ENCODE measurements at regions of chr19 and their contacts with region 1.

Region 1: GRCh38 chr19:6862673-6863078 is 24.7 kb upstream of the ADGRE1 start:
- DNase-seq: peak; percentile 78
- H3K4me3 ChIP-seq: no peak overlapping the region
- H3K27ac ChIP-seq: no peak overlapping the region
- H3K4me1 ChIP-seq: peaks cover 3% of the 10 kb centered on the region
- H3K27me3 ChIP-seq: no peaks in the 10 kb centered on the region
- CTCF ChIP-seq: peak; percentile 87 to 88

Region 2: DNA sequence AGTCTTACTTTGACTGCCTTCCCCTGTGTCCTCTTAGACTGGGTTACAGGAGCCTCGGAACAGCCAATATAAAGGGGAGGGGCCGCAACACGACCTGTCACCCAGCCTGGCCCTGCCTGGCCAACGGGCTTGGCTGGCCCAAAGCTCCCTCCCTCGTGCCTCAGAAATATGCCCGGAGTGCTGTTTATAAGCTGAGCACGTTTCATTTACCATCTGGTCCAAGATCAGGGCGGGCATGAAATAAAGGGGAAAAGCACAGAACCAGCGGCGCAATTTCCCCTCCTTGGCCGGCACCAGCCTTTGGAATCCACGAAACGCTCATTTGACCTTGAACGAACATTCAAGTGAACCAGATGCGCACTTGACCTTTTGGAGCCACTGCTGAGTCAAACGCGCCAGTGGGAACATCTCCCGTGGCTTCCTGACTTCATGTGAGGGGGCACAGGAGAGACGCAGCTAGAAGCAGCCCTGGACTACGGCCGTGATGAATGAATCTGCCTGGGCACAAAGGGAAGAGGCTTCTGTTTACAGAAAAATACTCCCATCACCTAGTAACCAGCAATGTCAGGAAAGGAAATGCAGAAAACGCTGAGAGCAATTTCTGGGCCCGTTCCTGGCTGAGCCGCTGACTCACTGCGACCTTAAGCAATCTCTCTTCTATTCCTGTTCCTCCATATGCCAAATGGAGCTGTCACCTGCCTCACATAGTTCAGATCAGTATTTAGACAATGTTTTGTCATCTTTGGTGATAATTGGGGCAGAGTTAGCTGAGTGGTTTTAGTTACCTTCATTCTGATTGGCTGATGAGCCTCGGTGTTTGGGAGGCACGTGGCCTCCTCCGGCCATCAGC is 805.6 kb before region 1 on chr19:
- CTCF ChIA-PET with region 1: no interaction called
- dilution Hi-C with region 1: no loop called
- in situ Hi-C with region 1: no loop called
- intact Hi-C with region 1: loop called (anchors 10 kb)
- DNase-seq: peak; percentile 98
- H3K4me3 ChIP-seq: peak overlapping the region; percentile 6 to 36 (median 23)
- H3K27ac ChIP-seq: peak overlapping the region; percentile 99
- H3K4me1 ChIP-seq: peaks cover 57% of the 10 kb centered on the region
- H3K27me3 ChIP-seq: no peaks in the 10 kb centered on the region
- CTCF ChIP-seq: peak in 1 of 2 donors; percentile 1

Region 3: GRCh38 chr19:6297202-6297601 is 565.5 kb before region 1 on chr19:
- CTCF ChIA-PET with region 1: no interaction called
- dilution Hi-C with region 1: no loop called
- in situ Hi-C with region 1: no loop called
- intact Hi-C with region 1: loop called (anchors 5 kb)
- DNase-seq: no peak
- H3K4me3 ChIP-seq: no peak overlapping the region
- H3K27ac ChIP-seq: no peak overlapping the region
- H3K4me1 ChIP-seq: no peaks in the 10 kb centered on the region
- H3K27me3 ChIP-seq: peaks cover 2% of the 10 kb centered on the region
- CTCF ChIP-seq: no peak

Region 4: DNA sequence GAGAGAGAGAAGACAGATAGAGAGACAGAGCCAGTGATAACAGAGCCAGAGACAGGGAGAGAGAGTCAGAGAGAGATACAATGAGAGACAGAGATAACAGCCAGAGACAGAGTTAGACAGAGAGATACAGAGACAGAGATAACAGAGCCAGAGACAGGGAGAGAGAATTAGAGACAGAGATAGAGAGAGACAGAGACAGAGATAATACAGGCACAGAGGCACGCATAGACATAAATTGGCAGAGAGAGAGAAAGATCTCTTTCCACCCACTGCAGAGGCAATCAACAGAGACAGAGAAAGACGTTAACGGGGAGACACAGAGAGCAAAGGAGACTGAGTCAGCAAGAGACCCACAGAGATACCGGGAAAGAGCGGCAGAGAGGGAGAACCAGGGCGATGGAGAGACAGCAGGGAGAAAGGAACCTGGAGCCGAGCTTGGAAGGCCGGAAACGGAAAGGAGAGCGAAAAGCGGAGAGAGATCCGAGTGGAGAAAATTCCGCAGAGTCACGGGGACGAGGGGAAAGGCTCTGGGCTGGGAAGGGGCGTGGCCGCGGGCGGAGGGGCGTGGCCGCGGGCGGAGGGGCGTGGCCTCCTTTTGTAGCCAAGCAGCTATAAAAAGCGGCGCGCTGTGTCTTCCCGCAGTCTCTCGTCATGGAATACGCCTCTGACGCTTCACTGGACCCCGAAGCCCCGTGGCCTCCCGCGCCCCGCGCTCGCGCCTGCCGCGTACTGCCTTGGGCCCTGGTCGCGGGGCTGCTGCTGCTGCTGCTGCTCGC is 332.1 kb before region 1 on chr19 and contains the start of gene TNFSF9:
- CTCF ChIA-PET with region 1: no interaction called
- dilution Hi-C with region 1: no loop called
- in situ Hi-C with region 1: no loop called
- intact Hi-C with region 1: loop called (anchors 5 kb)
- DNase-seq: peak; percentile 87
- H3K4me3 ChIP-seq: peak within 1 kb of the TSS; percentile 63 to 88 (median 77)
- H3K27ac ChIP-seq: peak within 1 kb of the TSS; percentile 90
- H3K4me1 ChIP-seq: peaks cover 11% of the 10 kb centered on the region
- H3K27me3 ChIP-seq: no peaks in the 10 kb centered on the region
- CTCF ChIP-seq: no peak
- total RNA-seq, gene TNFSF9: 9.5 to 15.2 TPM

Region 5: GRCh38 chr19:6737284-6738046 is 125.2 kb before region 1 on chr19 and contains the start of gene GPR108:
- CTCF ChIA-PET with region 1: interaction called, 25 read pairs
- dilution Hi-C with region 1: no loop called
- in situ Hi-C with region 1: no loop called
- intact Hi-C with region 1: loop called (anchors 1 kb)
- DNase-seq: peak; percentile 100
- H3K4me3 ChIP-seq: peak within 1 kb of the TSS; percentile 74 to 99 (median 83)
- H3K27ac ChIP-seq: peak within 1 kb of the TSS; percentile 80
- H3K4me1 ChIP-seq: peaks cover 29% of the 10 kb centered on the region
- H3K27me3 ChIP-seq: no peaks in the 10 kb centered on the region
- CTCF ChIP-seq: no peak
- total RNA-seq, gene GPR108: 50.2 to 95.9 TPM